ENCODE measurements at regions of chr9 and their contacts with region 1.

Region 1: GRCh38 chr9:84170521-84171141 is 169.9 kb downstream of the SLC28A3 start:
- DNase-seq: peak; percentile 93
- ATAC-seq: peak; percentile 97

Region 2: DNA sequence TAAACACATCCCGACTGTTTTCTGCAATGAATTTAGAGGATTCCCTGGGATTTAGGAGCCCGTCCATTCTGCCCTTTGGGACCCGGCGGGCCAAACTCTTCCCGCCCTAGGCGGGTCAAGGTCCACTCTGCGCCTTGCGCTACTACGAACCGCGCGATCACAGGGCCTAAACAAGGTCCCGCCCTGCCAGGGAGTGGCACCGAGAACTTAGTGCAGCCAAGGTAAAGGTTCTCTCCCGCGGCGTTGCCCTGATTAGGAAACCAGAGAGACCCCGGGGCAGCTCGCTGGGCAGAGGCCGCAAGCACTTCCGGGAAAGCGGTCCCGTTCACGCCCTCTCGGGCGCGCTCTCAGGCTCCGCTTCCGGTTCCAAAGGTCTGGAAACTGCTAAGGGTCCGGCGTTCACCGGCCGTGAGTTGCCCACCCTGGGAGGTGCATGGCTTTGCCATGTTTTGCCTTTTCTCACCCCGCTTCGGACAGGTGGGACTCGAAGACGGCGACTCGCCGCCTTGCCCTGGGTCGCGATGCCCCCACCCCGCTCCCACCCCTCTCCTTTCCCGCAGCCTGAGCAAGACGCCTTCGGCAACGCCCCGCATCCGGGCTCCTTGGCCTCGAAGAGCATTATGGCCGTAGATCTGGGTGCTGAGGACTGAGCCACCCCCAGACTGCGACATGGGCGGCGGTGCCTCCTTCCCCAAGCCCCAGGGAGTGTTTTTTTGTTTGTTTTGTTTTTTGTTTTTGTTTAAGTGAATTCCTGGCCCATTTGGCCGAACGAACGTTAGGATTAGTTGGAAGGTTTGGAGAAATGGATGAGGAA is 214.0 kb before region 1 on chr9:
- intact Hi-C with region 1: loop called (anchors 10 kb)
- DNase-seq: peak; percentile 89
- ATAC-seq: peak; percentile 95

Region 3: DNA sequence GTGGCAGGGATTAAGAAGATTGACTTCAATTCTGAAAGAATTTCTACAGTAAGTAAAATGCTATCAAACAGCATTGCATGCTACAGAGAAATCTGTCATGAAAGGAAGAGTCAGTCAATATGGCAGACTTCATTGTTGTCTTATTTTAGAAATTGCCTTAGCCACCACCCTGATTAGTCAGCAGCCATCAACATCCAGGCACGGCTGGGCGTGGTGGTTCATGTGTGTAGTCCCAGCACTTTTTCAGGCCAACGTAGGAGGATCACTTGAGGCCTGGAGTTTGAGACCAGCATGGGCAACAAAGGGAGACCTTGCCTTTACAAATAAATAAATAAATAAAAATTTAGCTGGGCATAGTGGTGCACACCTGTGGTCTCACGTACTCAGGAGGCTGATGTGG is 143.4 kb before region 1 on chr9:
- intact Hi-C with region 1: no loop called
- DNase-seq: no peak
- ATAC-seq: no peak

Region 4: GRCh38 chr9:84061594-84062193 is 108.9 kb before region 1 on chr9:
- intact Hi-C with region 1: loop called (anchors 10 kb)
- DNase-seq: peak; percentile 35
- ATAC-seq: peak; percentile 92

Region 5: GRCh38 chr9:84261082-84261746 is 90.6 kb after region 1 on chr9:
- intact Hi-C with region 1: loop called (anchors 10 kb)
- DNase-seq: peak; percentile 90
- ATAC-seq: peak; percentile 99